ENCODE measurements at regions of chr5 and their contacts with region 1.

Region 1: GRCh38 chr5:137714946-137715345 is 20.9 kb downstream of the KLHL3 start:
- DNase-seq: no peak
- H3K4me3 Mint-ChIP-seq: no peak overlapping the region
- H3K27ac Mint-ChIP-seq: no peak overlapping the region
- H3K4me1 Mint-ChIP-seq: no peaks in the 10 kb centered on the region
- H3K27me3 Mint-ChIP-seq: no peaks in the 10 kb centered on the region

Region 2: DNA sequence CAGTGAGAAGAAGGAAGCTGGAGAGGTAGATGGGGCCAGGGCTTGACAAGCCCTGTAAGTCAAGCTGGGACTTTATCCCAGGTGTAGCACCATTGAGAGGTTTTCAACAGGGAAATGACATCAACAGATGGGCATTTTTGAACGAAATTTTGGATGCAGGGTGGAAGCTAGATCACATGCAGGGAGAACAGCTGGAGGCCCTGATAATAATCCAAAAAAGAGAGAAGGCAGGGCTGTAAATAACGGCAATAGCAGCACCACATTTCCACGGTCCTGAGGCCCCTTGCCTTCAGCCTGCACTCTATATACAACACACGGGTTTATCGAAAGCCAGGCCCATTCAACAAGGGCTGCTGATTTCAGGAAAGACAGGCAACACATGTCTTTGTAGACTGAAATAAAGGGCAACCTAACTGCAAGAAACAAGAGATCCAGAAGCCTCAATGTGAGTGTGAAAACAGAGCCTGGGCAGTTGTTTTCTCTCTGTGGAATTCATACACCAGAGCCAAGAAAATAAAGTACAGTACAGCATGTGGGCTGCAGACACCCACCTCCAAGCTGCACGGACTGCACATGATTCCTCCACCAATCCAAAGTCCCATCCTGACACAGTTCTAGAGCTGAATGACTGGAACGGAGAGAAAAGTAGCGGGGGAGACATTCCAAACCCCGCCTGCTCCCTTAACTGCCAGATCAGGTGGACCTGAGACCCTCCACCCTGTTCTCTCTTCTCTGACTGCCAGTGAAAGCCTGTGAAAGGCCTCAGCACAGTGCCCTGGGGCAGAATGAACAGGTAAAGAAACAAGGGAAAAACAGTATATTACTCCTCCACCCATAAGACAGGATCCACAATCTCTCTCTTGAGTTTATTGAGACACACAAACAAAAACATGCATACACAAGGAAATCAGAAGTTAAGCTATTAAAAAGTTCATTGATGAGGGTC is 15.3 kb before region 1 on chr5:
- intact Hi-C with region 1: no loop called
- DNase-seq: no peak
- H3K4me3 Mint-ChIP-seq: no peak overlapping the region
- H3K27ac Mint-ChIP-seq: no peak overlapping the region
- H3K4me1 Mint-ChIP-seq: peaks cover 24% of the 10 kb centered on the region
- H3K27me3 Mint-ChIP-seq: no peaks in the 10 kb centered on the region

Region 3: GRCh38 chr5:137743031-137743640 is 28.2 kb after region 1 on chr5:
- intact Hi-C with region 1: loop called (anchors 2 kb)
- DNase-seq: peak; percentile 54
- H3K4me3 Mint-ChIP-seq: no peak overlapping the region
- H3K27ac Mint-ChIP-seq: no peak overlapping the region
- H3K4me1 Mint-ChIP-seq: no peaks in the 10 kb centered on the region
- H3K27me3 Mint-ChIP-seq: peaks cover 2% of the 10 kb centered on the region

Region 4: GRCh38 chr5:137837491-137838389 is 122.8 kb after region 1 on chr5:
- intact Hi-C with region 1: no loop called
- DNase-seq: no peak
- H3K4me3 Mint-ChIP-seq: no peak overlapping the region
- H3K27ac Mint-ChIP-seq: no peak overlapping the region
- H3K4me1 Mint-ChIP-seq: no peaks in the 10 kb centered on the region
- H3K27me3 Mint-ChIP-seq: peaks cover 6% of the 10 kb centered on the region

Region 5: DNA sequence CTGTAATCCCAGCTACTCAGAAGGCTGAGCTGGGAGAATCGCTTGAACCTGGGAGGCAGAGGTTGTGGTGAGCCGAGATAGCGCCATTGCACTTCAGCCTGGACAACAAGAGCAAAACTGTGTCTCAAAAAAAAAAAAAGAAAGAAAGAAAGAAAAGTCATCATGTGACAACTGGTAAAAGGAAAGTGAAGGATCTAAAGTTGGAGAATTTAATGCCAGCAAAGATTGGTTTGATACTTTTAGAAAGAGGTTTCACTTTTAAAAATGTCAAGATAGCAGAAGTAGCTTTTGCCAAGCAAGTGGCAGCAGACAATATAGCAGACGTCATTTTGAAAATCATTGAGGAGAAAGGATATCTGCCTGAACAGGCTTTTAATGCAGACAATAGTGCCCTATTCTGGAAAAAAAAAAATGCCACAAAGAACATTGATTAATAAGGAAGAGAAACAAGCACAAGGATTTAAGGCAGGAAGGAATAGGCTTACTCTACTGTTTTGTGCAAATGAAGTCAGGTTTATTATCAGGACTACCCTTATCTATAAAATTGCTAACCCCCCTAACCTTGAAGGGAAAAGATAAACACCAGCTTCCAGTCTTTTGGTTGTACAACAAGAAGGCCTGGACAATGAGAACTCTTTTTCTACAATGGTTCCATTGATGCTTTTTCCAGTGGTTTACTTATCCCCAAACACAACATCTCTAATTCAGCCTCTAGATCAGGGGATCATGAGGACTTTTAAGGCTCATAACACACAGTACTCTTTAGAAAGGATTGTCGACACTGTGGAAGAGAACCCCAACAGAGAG is 186.3 kb after region 1 on chr5:
- intact Hi-C with region 1: no loop called
- DNase-seq: no peak
- H3K4me3 Mint-ChIP-seq: no peak overlapping the region
- H3K27ac Mint-ChIP-seq: no peak overlapping the region
- H3K4me1 Mint-ChIP-seq: peaks cover 8% of the 10 kb centered on the region
- H3K27me3 Mint-ChIP-seq: peaks cover 5% of the 10 kb centered on the region